ENCODE measurements at regions of chr6 and their contacts with region 1.

Region 1: GRCh38 chr6:147506704-147507114 is 1.8 kb upstream of the SAMD5 start:
- DNase-seq: peak; percentile 72
- H3K4me3 Mint-ChIP-seq: no peak overlapping the region
- H3K27ac Mint-ChIP-seq: no peak overlapping the region
- H3K4me1 Mint-ChIP-seq: peaks cover 12% of the 10 kb centered on the region
- H3K27me3 Mint-ChIP-seq: peaks cover 63% of the 10 kb centered on the region

Region 2: DNA sequence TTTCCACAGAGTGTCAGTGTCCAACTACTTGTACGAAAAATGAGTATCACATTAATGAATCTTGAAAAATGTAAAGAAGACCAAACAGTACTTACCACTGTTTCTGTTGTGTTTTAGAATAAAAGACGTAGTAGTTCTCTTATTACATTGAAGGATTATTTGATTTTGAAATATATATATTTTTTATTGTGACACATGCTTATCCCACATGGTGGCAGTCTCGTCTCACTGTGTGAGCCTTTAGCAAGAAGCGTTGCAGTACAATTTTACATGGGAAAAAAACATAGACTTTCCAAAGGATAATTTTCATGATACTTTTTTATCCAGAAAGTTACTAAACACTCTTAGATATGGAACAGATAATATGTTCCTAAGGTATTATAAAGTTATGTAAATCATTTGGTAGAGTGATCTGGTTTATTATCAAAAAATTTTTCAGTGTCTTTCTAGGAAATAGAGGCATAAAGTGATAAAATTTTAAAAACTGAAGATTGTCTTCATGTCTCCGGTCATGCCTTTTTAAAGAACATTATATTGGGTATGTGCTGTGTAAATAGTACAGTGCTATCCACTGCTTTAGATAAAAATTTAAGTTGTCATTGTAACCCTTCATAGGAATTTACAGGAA is 115.7 kb before region 1 on chr6:
- CTCF ChIA-PET with region 1: interaction called, 5 read pairs
- intact Hi-C with region 1: loop called (anchors 2 kb)
- DNase-seq: peak; percentile 44
- H3K4me3 Mint-ChIP-seq: no peak overlapping the region
- H3K27ac Mint-ChIP-seq: no peak overlapping the region
- H3K4me1 Mint-ChIP-seq: no peaks in the 10 kb centered on the region
- H3K27me3 Mint-ChIP-seq: no peaks in the 10 kb centered on the region

Region 3: GRCh38 chr6:148166339-148166968 is 659.7 kb after region 1 on chr6:
- CTCF ChIA-PET with region 1: interaction called, 21 read pairs
- intact Hi-C with region 1: loop called (anchors 1 kb)
- DNase-seq: no peak
- H3K4me3 Mint-ChIP-seq: no peak overlapping the region
- H3K27ac Mint-ChIP-seq: no peak overlapping the region
- H3K4me1 Mint-ChIP-seq: no peaks in the 10 kb centered on the region
- H3K27me3 Mint-ChIP-seq: no peaks in the 10 kb centered on the region

Region 4: GRCh38 chr6:148250975-148251685 is 744.4 kb after region 1 on chr6:
- CTCF ChIA-PET with region 1: no interaction called
- intact Hi-C with region 1: loop called (anchors 2 kb)
- DNase-seq: no peak
- H3K4me3 Mint-ChIP-seq: no peak overlapping the region
- H3K27ac Mint-ChIP-seq: no peak overlapping the region
- H3K4me1 Mint-ChIP-seq: no peaks in the 10 kb centered on the region
- H3K27me3 Mint-ChIP-seq: peaks cover 7% of the 10 kb centered on the region